Tibial artery (tissue), 4 donors: ENCODE measurements at regions of chr17 and their contacts with region 1.

Region 1: DNA sequence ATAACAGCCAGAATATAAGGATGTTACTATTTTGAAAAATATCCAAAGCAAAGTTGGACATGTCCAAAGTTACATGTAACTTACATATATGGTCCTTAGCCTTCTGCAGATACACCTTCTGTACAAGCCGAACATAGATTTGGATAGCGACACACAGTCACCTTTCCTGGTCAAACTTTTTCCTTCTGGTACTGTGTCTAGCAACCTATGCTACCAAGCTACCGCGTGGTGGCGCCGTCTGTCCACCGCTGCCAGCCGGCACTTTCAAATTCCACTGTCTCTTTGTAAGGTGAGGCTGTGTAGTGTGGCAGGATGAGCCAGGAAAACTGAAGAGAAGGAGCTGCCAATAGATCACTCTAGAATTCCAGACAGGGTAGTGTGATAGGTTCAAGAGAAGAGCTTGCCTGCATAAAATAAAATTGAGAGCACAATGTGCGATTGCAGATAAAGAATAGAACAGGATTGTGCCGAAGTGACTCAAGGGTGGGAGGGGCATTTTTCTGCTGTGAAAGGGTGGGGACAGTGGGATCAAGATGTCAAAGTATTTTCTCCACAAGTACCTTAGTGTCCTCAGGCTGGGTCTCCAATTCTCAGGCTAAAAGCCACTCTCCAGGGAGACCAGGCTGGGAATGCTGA is 366.9 kb downstream of the SLC39A11 start:
- DNase-seq: no peak
- H3K4me3 ChIP-seq: no peak overlapping the region
- H3K27ac ChIP-seq: no peak overlapping the region
- H3K4me1 ChIP-seq: no peaks in the 10 kb centered on the region
- H3K27me3 ChIP-seq: no peaks in the 10 kb centered on the region
- CTCF ChIP-seq: peak; percentile 71 to 78

Region 2: DNA sequence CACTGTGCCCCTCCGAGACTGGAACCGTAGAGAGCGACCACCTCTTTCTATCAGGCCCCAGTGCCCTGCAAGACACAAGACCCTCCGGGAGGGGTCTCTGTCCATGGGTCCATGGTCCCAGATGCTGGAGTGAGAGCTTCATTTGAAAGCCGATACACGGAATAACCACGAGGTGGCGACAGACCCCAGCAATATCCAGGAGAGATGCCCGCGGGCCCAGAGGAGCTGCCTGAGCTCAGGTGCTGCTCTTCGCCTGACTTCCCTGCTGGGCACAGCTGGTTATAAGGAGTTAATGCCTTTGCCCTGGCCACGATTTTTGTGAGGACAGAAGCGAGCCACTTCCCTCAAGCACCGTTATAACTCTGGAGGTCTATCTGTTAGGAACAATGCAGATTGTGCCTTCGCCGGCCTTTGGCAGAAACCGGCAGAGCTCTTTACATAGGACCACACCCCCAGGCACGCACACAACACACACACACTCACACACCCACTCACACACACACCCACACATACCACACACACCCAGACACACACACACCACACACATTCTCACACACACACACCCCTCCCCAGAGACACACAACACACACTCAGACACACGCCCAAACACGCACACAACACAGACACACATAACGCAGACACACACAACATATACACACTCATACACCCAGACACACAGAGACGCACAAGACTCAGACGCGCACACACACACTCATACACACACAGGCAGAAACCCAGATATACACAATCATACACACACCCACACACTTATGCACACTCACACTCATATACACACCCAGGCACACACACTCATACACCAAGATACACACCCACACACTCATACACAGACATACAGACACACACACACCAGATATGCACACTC is 168.4 kb before region 1 on chr17:
- intact Hi-C with region 1: loop called (anchors 10 kb)
- DNase-seq: peak in 1 of 2 donors; percentile 56
- H3K4me3 ChIP-seq: no peak overlapping the region
- H3K27ac ChIP-seq: no peak overlapping the region
- H3K4me1 ChIP-seq: no peaks in the 10 kb centered on the region
- H3K27me3 ChIP-seq: peaks cover 0 to 22% of the 10 kb centered on the region in 2 donors
- CTCF ChIP-seq: peak; percentile 56 to 78

Region 3: DNA sequence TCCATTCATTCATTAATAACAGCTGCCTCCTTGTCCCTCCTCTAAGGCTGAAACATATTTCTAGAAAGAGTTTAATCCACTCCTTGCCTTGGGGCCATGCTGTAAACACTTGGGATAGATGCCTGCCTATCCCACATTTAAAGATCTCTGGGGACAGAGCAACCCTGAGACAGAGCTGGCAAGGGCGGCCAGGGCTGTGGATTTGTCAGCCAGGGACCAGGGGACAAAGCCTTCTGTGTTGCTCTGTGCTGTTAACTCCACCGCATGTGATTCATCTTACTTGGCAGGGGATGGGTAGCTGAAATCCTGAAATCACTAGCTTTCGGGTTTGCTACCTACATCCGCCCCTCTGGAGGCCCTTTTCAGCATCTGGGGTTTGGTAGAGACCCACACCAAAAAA is 26.0 kb before region 1 on chr17:
- intact Hi-C with region 1: no loop called
- DNase-seq: no peak
- H3K4me3 ChIP-seq: no peak overlapping the region
- H3K27ac ChIP-seq: no peak overlapping the region
- H3K4me1 ChIP-seq: no peaks in the 10 kb centered on the region
- H3K27me3 ChIP-seq: no peaks in the 10 kb centered on the region
- CTCF ChIP-seq: no peak

Region 4: GRCh38 chr17:72778169-72779151 is 52.9 kb after region 1 on chr17:
- intact Hi-C with region 1: no loop called
- DNase-seq: no peak
- H3K4me3 ChIP-seq: no peak overlapping the region
- H3K27ac ChIP-seq: no peak overlapping the region
- H3K4me1 ChIP-seq: no peaks in the 10 kb centered on the region
- H3K27me3 ChIP-seq: no peaks in the 10 kb centered on the region
- CTCF ChIP-seq: no peak